Ascending aorta (tissue), 2 donors: ENCODE measurements at regions of chr5 and their contacts with region 1.

Region 1: GRCh38 chr5:61331407-61332357 is at the start of gene ZSWIM6:
- DNase-seq: peak; percentile 98 to 100
- H3K4me3 ChIP-seq: peak within 1 kb of the TSS; percentile 94 to 99
- H3K27ac ChIP-seq: peak within 1 kb of the TSS; percentile 96 to 98
- H3K4me1 ChIP-seq: peaks cover 0 to 18% of the 10 kb centered on the region in 2 donors
- H3K27me3 ChIP-seq: no peaks in the 10 kb centered on the region
- CTCF ChIP-seq: no peak
- total RNA-seq, gene ZSWIM6: 8.8 TPM

Region 2: DNA sequence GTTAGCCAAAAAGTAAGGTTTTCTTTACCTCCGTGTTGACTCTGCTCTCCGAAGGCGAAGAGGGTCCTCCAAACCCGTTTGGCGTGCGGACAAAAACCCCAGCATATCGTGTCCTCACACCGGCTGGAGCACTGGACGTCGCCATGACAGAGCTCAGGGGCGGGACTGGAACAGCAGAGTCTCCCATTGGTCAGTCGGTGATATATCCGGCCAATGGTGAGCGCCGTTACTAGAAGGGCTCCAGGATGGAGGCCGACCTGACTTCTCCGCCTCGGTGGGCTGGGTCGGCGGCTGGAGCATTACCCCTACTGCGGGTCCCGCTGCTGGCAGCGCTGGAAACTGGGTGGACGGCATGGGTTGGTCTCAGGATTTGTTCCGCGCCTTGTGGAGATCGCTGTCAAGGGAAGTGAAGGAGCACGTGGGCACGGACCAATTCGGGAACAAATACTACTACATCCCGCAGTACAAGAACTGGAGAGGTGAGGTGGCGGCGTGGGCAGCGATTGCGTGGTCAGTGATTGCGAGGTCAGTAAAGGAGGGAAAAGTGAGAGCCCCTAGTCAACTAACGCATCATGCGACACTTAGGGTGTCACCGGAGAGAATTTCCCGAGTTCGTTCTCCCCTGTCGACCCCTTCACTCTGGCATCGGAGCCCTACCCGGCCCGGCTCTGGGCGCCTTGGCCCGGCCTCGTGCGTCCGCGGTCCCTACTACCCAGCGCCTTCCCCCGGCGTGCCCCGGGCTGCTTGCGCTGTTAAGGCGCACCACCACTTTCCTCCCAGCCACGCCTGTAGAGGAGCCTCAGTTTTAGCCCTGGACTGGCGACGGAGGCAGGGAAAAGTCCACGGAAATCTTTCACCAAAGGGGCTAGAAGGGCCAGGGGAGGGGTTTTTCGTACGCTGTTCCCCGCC is 386.5 kb before region 1 on chr5 and contains the starts of genes ERCC8 and NDUFAF2:
- intact Hi-C with region 1: loop called (anchors 1 kb)
- DNase-seq: peak; percentile 77 to 96
- H3K4me3 ChIP-seq: peak within 1 kb of the TSS; percentile 80 to 90
- H3K27ac ChIP-seq: peak within 1 kb of the TSS; percentile 84 to 91
- H3K4me1 ChIP-seq: peaks cover 0 to 4% of the 10 kb centered on the region in 2 donors
- H3K27me3 ChIP-seq: no peaks in the 10 kb centered on the region
- CTCF ChIP-seq: no peak
- total RNA-seq, gene ERCC8: 2.3 TPM
- total RNA-seq, gene NDUFAF2: 38.3 TPM

Region 3: DNA sequence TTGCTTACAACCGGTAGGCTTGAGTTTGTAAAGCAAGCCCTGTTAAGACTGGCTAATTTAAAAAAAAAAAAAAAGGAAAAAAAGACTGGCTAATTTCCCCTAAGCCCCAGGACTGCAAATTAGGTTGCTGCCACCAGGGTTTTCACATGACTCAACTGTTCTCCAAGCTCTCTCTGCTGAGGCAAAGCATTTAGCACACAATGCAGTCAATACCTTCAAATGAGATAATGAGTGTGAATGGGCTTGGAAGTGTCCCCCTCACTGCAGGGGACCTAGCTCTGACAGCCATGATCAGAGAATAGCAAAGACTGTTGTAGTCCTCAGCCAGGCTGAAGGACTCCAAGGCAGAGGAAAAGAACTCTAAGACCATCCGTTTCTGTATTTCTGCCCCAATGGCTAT is 42.4 kb before region 1 on chr5:
- intact Hi-C with region 1: loop called (anchors 5 kb)
- DNase-seq: no peak
- H3K4me3 ChIP-seq: no peak overlapping the region
- H3K27ac ChIP-seq: no peak overlapping the region
- H3K4me1 ChIP-seq: peaks cover 0 to 4% of the 10 kb centered on the region in 2 donors
- H3K27me3 ChIP-seq: no peaks in the 10 kb centered on the region
- CTCF ChIP-seq: no peak

Region 4: DNA sequence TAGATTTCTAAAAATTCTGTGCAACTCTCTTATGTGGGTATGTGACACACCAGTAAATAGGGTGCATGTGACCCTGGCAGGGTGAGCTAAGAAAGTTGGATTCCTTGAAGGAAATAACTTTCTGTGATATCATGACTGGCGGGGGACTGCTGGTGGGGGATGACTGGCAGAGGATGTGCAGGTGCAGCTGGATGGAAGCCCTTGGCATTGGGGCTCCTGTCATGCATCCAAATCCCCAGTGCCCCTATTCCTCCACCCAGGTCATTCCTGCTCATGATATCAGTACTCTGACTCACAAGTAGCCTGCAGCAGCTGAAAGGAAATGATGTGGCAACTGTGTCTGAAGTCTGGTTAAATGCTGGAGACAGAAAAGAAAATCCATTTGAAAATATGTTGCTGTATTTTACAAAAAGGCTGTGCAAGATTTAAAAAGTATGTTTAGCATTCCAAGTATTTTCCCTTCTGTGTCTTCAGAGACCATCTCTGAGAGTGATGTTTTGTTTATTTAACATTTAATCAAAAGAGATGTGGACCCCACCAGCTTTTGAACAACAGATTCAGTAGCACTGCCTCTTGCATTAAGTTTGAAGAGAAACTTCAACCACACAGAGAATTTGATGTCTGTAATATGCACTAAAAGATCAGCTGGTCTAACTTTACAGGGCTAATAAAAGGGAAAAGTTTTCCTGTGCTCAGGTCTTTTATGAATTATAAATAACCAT is 17.6 kb before region 1 on chr5:
- intact Hi-C with region 1: loop called (anchors 2 kb)
- DNase-seq: peak; percentile 40 to 88
- H3K4me3 ChIP-seq: no peak overlapping the region
- H3K27ac ChIP-seq: peak overlapping the region; percentile 62 to 63
- H3K4me1 ChIP-seq: peaks cover 4 to 37% of the 10 kb centered on the region in 2 donors
- H3K27me3 ChIP-seq: no peaks in the 10 kb centered on the region
- CTCF ChIP-seq: no peak

Region 5: GRCh38 chr5:61449804-61450492 is 118.3 kb after region 1 on chr5:
- intact Hi-C with region 1: loop called (anchors 5 kb)
- DNase-seq: peak in 1 of 2 donors; percentile 65
- H3K4me3 ChIP-seq: no peak overlapping the region
- H3K27ac ChIP-seq: peak overlapping the region; percentile 70 to 84
- H3K4me1 ChIP-seq: peaks cover 5 to 23% of the 10 kb centered on the region in 2 donors
- H3K27me3 ChIP-seq: no peaks in the 10 kb centered on the region
- CTCF ChIP-seq: no peak

Region 6: DNA sequence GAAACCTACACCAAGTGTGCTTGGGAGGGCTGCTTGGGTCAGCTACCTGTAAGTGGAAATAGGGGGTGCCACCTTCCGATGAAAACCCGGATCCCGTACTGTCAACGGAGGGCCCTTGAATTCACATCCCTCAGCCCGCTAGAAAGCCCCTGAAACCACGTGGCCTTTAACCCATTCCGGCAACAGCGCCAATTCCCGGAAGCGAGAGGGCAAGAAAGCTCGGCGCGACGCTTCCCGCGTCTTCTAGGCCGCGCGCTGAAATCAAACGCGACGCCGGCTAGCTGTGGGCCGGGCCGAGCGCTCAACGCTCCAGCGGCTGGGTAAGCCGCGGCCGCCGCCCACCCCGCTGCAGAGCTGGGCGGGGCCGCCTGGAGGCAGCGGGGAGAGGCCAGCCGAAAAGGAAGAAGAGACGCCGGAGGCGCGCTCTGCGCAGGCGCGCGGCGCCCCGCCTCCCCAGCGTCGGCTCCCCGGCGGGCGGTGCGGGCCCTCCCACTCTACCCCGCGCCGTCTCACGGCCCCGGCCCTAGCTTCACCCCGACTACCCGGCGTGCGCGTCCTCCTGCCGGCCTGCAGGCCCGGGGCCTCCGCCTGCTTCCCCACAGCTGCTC is 974.1 kb after region 1 on chr5 and contains the start of gene KIF2A:
- intact Hi-C with region 1: loop called (anchors 5 kb)
- DNase-seq: peak; percentile 63 to 95
- H3K4me3 ChIP-seq: peak within 1 kb of the TSS; percentile 93 to 98
- H3K27ac ChIP-seq: peak within 1 kb of the TSS; percentile 79 to 94
- H3K4me1 ChIP-seq: peaks cover 3 to 4% of the 10 kb centered on the region in 2 donors
- H3K27me3 ChIP-seq: no peaks in the 10 kb centered on the region
- CTCF ChIP-seq: no peak
- total RNA-seq, gene KIF2A: 19.8 TPM